ENCODE measurements at regions of chr1 and their contacts with region 1.

Region 1: DNA sequence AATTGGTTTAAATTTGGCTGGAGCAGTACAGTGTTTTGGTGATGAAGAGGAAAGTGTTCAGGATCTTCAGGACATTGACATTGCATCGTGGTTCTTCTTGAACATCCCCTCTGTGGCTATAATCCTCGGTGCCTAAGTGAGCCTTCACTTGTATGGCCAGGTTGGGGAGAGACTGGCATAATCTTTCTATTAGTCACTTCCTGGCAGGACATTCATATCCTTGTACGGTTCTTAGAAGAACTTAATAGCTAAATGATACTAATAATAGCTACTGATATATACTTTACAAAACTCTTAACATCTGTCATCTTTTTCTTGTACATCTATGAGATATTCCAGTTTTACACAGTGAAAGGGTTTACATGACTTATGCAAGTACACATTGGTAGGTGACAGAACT is 35.8 kb downstream of the CELF3 start:
- DNase-seq: peak; percentile 96
- ATAC-seq: peak; percentile 99
- H3K4me3 ChIP-seq: peak overlapping the region; percentile 36
- H3K27ac ChIP-seq: peak overlapping the region; percentile 84
- H3K4me1 ChIP-seq: peaks cover 32% of the 10 kb centered on the region
- H3K27me3 ChIP-seq: no peaks in the 10 kb centered on the region
- CTCF ChIP-seq: no peak

Region 2: GRCh38 chr1:151534665-151535278 is 146.0 kb before region 1 on chr1:
- CTCF ChIA-PET with region 1: no interaction called
- POLR2A ChIA-PET with region 1: interaction called, 13 read pairs
- intact Hi-C with region 1: no loop called
- DNase-seq: peak; percentile 88
- ATAC-seq: peak; percentile 48
- H3K4me3 ChIP-seq: no peak overlapping the region
- H3K27ac ChIP-seq: no peak overlapping the region
- H3K4me1 ChIP-seq: peaks cover 39% of the 10 kb centered on the region
- H3K27me3 ChIP-seq: no peaks in the 10 kb centered on the region
- CTCF ChIP-seq: peak; percentile 99

Region 3: DNA sequence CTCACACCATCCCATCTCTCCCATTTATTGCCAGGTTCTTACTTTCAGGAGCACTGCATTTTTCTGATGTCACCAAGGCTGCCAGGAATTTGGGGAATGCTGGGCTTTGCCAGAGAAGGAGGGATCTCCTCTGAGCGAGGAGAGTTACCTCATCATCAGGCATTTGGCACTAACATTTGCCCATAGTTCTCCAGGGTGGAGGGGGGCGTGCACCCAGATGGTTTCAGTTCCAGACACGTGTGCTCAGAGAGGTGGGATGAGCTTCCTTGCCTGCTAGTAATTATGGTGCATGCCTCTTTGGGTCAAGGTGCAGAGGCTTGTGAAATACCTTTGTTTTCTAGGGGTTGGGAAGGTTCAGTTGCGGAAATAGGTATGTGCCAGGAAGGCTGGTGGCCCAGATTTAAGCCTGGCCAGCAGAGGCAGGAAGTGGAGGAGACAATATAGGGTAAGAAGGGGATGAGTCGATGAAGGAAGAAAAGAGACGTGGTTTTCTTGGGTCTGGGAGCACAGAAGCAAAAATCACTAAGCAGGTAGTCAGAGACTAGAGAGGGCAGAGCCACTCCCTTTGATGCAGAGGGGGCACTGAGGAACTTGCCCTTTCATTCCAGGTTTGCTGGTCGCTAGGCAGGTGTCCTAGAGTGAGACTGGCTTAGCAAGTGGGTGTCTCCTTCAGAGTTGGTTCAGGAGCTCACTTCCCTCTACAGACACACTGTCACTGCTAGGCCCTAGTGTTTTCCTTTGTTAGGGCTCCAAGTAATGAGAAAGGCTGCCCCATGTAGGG is 133.5 kb before region 1 on chr1:
- CTCF ChIA-PET with region 1: no interaction called
- POLR2A ChIA-PET with region 1: no interaction called
- intact Hi-C with region 1: loop called (anchors 5 kb)
- DNase-seq: peak; percentile 99
- ATAC-seq: peak; percentile 72
- H3K4me3 ChIP-seq: peak overlapping the region; percentile 21
- H3K27ac ChIP-seq: peak overlapping the region; percentile 89
- H3K4me1 ChIP-seq: peaks cover 60% of the 10 kb centered on the region
- H3K27me3 ChIP-seq: no peaks in the 10 kb centered on the region
- CTCF ChIP-seq: no peak

Region 4: DNA sequence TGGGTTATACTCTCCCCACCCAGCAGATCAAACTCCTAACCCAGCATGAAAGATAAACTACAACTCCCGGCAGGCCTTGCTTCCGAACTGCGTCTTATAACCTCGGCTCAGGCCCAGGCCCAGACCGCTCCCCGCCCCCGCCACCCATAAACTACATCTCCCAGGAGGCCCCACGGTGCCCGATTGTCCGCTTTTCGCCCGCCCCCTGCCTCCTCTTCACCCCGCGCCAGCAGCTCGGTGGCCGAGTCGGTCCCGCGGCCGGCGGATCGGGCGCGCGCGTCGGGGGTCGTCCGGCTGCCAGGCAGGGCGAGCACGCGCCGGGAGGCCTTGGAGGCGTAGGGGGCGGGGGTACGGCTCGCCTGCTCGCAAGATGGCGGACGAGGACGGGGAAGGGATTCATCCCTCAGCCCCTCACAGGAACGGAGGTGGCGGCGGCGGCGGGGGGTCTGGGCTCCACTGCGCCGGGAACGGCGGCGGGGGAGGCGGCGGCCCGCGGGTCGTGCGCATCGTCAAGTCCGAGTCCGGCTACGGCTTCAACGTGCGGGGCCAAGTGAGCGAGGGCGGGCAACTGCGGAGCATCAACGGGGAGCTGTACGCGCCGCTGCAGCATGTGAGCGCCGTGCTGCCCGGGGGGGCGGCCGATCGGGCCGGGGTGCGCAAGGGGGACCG is 68.8 kb before region 1 on chr1 and contains the start of gene SNX27:
- CTCF ChIA-PET with region 1: no interaction called
- POLR2A ChIA-PET with region 1: no interaction called
- intact Hi-C with region 1: loop called (anchors 1 kb)
- DNase-seq: peak; percentile 93
- ATAC-seq: peak; percentile 82
- H3K4me3 ChIP-seq: peak within 1 kb of the TSS; percentile 87
- H3K27ac ChIP-seq: peak within 1 kb of the TSS; percentile 25; the same call in 1 of the 2 replicates
- H3K4me1 ChIP-seq: peaks cover 55% of the 10 kb centered on the region
- H3K27me3 ChIP-seq: no peaks in the 10 kb centered on the region
- CTCF ChIP-seq: no peak
- total RNA-seq, gene SNX27: 25.1 and 34.8 TPM in 2 replicates

Region 5: GRCh38 chr1:151639466-151639865 is 41.3 kb before region 1 on chr1:
- CTCF ChIA-PET with region 1: interaction called, 10 read pairs
- POLR2A ChIA-PET with region 1: interaction called, 5 read pairs
- intact Hi-C with region 1: no loop called
- DNase-seq: no peak
- ATAC-seq: no peak
- H3K4me3 ChIP-seq: no peak overlapping the region
- H3K27ac ChIP-seq: no peak overlapping the region
- H3K4me1 ChIP-seq: peaks cover 8% of the 10 kb centered on the region
- H3K27me3 ChIP-seq: no peaks in the 10 kb centered on the region
- CTCF ChIP-seq: no peak

Region 6: DNA sequence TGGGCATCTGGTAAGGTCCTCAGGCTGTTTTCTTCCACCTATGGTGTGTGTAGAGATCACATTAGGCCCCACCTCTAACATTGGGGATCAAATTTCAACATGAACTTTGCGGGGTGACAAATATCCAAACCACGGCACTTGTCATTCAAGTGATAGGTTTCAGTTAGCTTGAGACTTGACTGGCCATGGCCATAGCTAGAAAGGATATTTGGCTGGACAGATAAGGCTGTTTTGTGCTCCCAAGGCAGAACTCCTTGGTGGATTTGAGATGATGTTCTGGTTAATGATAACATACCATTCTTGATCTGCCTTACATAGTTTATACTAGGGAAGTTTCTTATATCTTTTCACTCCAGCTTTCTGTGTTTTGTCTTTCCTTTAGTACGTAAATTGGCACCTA is 12.7 kb before region 1 on chr1:
- CTCF ChIA-PET with region 1: no interaction called
- POLR2A ChIA-PET with region 1: no interaction called
- intact Hi-C with region 1: no loop called
- DNase-seq: no peak
- ATAC-seq: no peak
- H3K4me3 ChIP-seq: no peak overlapping the region
- H3K27ac ChIP-seq: no peak overlapping the region
- H3K4me1 ChIP-seq: no peaks in the 10 kb centered on the region
- H3K27me3 ChIP-seq: no peaks in the 10 kb centered on the region
- CTCF ChIP-seq: no peak